ENCODE measurements at regions of chr9 and their contacts with region 1.

Region 1: DNA sequence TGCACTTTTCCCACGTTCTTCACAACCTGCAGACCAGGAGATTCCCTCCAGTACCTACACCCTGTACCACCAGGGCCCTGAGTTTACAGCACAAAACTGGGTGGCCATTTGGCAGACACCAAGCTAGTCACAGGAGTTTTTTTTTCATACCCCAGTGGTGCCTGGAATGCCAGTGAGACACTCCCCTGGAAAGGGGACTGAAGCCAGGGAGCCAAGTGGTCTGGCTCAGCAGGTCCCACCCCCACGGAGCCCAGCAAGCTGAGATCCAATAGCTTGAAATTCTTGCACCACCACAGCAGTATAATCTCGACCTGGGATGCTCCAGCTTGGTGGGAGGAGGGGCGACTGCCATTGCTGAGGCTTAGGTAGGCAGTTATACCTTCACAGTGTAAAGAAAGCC is 26.3 kb upstream of the SMC5 start:
- DNase-seq: no peak

Region 2: GRCh38 chr9:69433392-69433791 is 799.1 kb before region 1 on chr9:
- intact Hi-C with region 1: loop called in 1 of 2 experiments (anchors 10 kb)
- DNase-seq: no peak

Region 3: GRCh38 chr9:69599232-69599971 is 633.1 kb before region 1 on chr9:
- intact Hi-C with region 1: no loop called
- DNase-seq: no peak

Region 4: GRCh38 chr9:70218767-70219166 is 13.7 kb before region 1 on chr9:
- intact Hi-C with region 1: no loop called
- DNase-seq: no peak

Region 5: DNA sequence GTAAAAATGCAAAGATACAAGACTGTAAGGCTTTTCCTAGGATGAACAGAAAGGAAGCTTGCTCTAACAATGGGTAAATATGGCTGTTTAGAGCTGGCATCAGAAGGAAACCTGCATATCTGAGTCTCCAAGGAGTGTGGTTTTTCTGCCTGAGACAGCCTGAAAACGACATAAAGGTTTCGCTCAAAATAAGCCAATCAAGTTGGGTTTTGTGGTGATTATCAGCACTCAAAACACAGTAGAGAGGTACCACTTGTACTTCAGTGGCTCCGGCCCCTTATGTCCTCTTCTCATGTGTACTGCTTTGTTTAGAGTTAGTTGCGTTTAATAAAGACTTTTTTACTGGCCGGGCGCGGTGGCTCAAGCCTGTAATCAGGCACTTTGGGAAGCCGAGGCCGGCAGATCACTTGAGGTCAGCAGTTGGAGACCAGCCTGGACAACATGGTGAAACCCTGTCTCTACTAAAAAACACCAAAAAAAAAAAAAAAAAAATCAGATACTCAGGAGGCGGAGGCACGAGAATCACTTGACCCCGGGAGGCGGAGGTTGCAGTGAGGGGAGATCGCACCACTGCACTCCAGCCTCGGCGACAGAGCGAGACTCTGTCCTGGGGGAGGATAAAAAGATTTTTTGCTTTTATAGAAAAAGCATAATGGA is 142.6 kb after region 1 on chr9:
- intact Hi-C with region 1: no loop called
- DNase-seq: no peak